ENCODE measurements at regions of chr5 and their contacts with region 1.

Region 1: DNA sequence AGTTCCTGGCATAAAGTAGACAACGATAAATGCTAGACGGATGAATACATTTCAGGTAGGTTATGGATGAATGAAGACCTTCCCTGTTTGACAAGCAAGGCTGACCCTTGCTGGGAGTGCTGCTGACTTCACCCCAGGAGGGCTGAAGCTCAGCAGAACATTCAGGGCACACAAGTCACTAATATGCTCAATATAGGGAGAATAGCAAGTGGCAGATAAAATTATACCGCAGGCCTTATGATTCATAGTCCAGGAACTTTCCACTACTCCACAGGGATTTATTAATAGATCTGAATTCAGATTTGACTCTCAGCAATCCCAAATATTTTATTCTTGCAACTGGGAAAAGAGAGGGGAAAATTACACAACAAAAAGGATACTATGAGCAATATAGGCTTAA is 38.2 kb upstream of the GRAMD2B start:
- DNase-seq: no peak
- ATAC-seq: no peak

Region 2: DNA sequence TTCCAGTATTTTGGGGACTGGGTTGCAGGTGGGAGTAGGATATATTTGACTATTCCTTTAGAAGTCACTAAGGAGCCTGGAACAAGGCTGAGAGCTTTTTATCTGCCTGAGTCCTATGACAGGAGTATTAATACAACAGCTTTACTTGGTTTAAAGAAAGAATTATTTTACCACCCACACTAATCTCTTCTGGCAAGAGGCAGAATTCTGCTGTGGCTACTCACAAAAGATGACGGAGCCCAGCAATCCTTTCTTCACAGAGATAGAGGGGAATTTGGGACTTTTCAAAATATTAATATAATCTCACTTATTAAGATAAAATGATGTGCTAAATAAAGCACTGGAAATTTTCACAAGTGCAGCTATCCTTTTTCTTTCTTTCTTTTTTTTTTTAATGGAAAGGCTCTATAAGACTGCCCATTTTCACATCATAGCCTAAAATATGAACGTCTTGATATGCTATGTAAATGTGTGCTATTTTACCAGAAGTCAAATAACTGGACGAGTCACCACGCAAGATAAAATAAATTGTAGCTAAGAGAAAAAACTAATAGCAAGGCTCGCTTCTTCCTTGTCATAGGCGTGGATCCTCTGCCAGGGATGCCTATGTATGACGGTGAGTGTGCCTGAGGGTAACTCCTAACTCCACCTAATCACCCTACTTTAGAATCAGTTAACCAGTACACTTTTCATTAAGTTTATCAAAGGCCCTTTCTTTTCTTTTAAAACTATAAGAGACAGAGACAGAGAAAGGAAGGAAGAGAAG is 1714.8 kb before region 1 on chr5:
- intact Hi-C with region 1: loop called (anchors 5 kb)
- DNase-seq: no peak
- ATAC-seq: no peak

Region 3: GRCh38 chr5:125987677-125988255 is 397.2 kb before region 1 on chr5:
- intact Hi-C with region 1: no loop called
- DNase-seq: no peak
- ATAC-seq: no peak